Endothelial cell of umbilical vein (primary cell): ENCODE measurements at regions of chr14 and their contacts with region 1.

Region 1: DNA sequence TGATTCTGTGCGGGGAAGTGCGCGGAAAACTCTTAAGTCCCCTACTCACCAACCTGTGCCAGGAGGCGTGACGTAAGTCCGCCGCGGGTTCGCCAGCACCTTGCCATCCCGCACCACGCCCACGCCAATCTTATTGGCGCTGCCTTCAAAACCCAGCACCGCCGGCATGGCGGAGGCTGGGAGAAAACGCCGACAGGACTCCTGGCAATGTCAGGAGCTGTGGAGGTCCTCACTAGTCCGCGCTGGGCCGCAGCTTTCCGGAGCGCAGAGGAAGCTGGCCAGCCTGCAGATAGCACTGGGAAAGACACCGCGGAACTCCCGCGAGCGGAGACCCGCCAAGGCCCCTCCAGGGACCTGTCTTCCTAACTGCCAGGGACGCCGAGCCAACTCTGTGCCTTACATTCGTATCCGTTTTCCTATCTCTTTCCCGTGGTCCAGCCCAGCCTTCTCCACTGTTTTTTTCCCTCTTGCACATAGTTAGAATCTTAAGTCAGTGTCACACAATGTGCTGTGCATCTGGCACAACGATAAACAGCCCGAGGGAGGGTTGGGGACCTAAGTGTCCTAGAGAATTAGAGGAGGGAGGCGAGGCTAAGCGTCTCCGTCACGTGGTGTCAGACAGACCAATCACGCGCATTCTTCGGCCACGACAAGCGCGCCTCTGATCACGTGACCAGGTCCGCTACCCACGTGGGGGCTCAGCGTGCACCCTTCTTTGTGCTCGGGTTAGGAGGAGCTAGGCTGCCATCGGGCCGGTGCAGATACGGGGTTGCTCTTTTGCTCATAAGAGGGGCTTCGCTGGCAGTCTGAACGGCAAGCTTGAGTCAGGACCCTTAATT is at the starts of genes APEX1 and OSGEP:
- DNase-seq: peak; percentile 99
- H3K4me3 ChIP-seq: peak within 1 kb of the TSS; percentile 85 to 99 (median 90)
- H3K27ac ChIP-seq: peak within 1 kb of the TSS; percentile 96
- H3K4me1 ChIP-seq: peaks cover 15% of the 10 kb centered on the region
- H3K27me3 ChIP-seq: no peaks in the 10 kb centered on the region
- CTCF ChIP-seq: no peak
- POLR2A ChIP-seq: peak; percentile 78
- total RNA-seq, gene APEX1: 227 and 231 TPM in 2 replicates
- total RNA-seq, gene OSGEP: 39.1 and 41.8 TPM in 2 replicates

Region 2: DNA sequence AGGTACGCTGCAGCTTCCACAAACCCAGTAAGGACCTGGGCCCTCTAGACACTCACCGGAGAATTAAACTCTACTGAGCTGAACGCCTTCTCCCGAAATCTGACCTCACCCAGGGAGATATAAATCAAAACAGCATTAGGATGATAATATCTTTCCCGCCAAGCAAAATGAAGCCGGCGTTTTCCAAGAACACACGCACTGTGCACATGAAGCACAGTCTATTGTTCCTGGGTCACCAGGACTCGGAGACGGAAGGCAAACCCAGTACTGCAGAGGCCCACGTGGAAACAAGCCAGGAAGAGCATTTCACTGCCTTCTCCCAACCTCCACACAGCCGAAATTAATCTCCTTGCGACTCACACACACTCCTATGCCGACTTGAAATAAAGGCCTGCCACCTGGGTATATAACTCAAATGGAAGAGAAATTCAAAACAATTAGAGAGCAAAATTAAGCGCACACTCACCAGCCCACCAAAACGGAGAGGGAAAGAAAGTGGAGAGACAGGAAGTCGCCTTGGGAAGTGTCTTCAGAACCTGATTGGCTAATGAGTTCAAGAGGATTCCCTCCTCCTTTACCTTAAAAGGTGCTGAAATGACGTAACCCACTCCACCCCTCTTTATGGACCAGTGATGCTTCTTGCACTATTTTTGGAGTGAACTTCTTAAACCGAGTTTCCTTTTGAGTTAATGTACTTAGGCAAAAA is 121.8 kb before region 1 on chr14 and contains the start of gene CCNB1IP1:
- CTCF ChIA-PET with region 1: interaction called, 9 read pairs
- POLR2A ChIA-PET with region 1: no interaction called
- dilution Hi-C with region 1: no loop called
- intact Hi-C with region 1: loop called (anchors 2 kb)
- DNase-seq: peak; percentile 87
- H3K4me3 ChIP-seq: peak within 1 kb of the TSS; percentile 48 to 93 (median 65)
- H3K27ac ChIP-seq: peak within 1 kb of the TSS; percentile 71
- H3K4me1 ChIP-seq: peaks cover 19% of the 10 kb centered on the region
- H3K27me3 ChIP-seq: no peaks in the 10 kb centered on the region
- CTCF ChIP-seq: no peak
- POLR2A ChIP-seq: peak; percentile 69
- total RNA-seq, gene CCNB1IP1: 35.5 and 38.9 TPM in 2 replicates

Region 3: DNA sequence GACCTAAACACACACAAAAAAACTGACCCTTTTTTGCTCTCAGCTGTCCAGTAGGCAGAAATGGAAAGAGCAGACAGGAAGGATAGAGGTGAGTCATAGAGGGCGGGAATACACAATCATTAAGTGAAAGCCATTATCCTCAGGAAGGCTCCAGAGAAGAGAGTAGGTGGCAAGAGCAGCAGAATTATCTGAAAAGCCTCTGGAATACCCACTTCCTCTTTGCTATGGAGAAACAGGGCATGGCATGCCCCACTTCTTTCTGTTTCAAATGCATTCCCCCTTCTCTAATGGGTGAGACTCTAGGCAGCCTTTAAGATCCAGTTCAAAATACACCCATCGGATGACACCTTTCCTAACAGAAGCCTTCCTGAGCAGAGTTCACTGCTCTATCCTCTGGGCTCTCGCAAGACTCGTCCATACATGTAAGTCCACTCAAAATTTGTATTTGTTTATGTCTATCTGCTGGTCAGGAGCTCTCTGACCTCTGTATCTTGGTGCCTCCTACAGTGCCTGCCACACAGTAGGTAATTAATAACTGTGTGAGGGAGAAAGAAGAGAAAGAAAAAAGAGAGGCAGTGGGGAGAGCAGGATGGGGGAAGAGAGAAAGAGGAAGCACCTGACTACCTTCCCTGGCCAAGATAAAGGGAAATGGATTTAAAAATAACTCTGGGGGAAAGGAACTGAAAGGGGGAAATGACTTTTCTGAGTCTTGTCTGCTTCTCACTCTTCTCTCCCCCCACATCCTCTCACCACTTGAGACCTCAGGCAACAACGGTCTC is 27.3 kb before region 1 on chr14:
- CTCF ChIA-PET with region 1: interaction called, 3 read pairs
- POLR2A ChIA-PET with region 1: interaction called, 4 read pairs
- dilution Hi-C with region 1: no loop called
- intact Hi-C with region 1: loop called (anchors 1 kb)
- DNase-seq: peak; percentile 72
- H3K4me3 ChIP-seq: peak overlapping the region in 1 of 3 experiments; percentile 56
- H3K27ac ChIP-seq: peak overlapping the region; percentile 74
- H3K4me1 ChIP-seq: peaks cover 18% of the 10 kb centered on the region
- H3K27me3 ChIP-seq: no peaks in the 10 kb centered on the region
- CTCF ChIP-seq: no peak
- POLR2A ChIP-seq: no peak

Region 4: DNA sequence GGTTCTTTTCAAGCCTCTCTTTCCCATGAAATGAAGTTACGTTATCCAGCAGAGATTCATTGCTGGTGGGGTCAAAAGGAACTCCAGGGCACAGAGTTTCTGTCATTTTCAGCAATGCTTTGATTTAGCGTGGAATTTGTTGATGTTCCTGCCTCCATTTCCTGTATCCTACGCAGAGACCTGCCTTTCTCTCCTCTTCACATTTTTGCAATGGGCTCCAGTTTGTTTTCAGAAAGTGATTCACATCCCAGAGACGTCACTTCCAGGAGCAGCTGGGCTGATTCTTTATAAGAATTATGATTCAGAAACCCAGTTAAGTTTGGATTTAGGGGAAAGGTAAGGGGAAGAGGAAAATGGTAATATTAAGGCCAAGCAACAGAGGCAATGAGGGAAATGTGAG is 62.2 kb after region 1 on chr14:
- CTCF ChIA-PET with region 1: no interaction called
- POLR2A ChIA-PET with region 1: no interaction called
- dilution Hi-C with region 1: no loop called
- intact Hi-C with region 1: loop called (anchors 2 kb)
- DNase-seq: peak; percentile 82
- H3K4me3 ChIP-seq: peak overlapping the region in 1 of 3 experiments; percentile 2
- H3K27ac ChIP-seq: peak overlapping the region; percentile 81
- H3K4me1 ChIP-seq: peaks cover 31% of the 10 kb centered on the region
- H3K27me3 ChIP-seq: no peaks in the 10 kb centered on the region
- CTCF ChIP-seq: no peak
- POLR2A ChIP-seq: no peak

Region 5: DNA sequence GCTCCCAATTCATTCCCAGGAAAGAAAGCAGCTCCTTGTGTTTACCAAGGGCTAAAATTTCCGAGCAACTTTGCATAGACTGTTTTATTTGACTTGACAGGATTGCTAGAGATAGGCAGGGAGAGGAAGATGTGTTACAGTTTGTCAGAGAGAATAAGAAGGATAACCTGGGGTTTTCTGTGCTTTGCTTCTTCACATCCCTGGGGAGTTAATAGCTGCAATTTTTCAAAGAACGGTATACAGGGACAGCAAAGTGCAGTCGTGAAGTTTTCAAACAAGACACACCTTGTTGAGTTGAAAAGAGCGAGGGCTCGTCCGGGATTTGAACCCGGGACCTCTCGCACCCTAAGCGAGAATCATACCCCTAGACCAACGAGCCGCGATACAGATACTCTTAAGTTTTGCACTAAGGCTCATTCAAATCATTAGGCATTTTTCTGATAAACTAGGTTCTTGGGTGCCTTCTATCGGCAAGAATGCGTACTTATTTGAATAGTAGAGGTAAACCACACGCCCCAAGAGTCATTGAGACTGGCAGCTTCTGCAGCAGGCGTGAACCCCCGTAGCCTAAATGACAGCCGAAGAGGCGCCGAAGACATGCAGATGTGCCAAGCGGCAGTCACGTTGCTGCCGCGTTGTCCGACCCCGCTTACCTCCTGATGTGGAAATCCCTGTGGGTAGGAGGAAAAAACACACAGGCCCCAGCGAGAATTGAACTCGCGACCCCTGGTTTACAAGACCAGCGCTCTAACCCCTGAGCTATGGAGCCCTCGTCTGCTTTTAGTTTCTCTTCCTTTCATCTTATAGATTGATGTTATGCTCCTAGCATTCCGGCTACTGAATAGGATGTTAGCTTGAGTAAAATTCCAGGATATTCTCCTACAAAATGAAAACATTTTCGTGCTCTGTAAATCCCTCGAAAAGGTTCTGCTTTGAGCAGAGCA is 158.6 kb after region 1 on chr14:
- CTCF ChIA-PET with region 1: interaction called, 3 read pairs
- POLR2A ChIA-PET with region 1: no interaction called
- dilution Hi-C with region 1: no loop called
- intact Hi-C with region 1: loop called (anchors 1 kb)
- DNase-seq: peak; percentile 97
- H3K4me3 ChIP-seq: peak overlapping the region; percentile 48 to 86 (median 70)
- H3K27ac ChIP-seq: peak overlapping the region; percentile 27
- H3K4me1 ChIP-seq: peaks cover 11% of the 10 kb centered on the region
- H3K27me3 ChIP-seq: peaks cover 3 to 6% of the 10 kb centered on the region in 2 experiments
- CTCF ChIP-seq: peak; percentile 55 to 65
- POLR2A ChIP-seq: no peak